ENCODE measurements at regions of chr2 and their contacts with region 1.

Region 1: DNA sequence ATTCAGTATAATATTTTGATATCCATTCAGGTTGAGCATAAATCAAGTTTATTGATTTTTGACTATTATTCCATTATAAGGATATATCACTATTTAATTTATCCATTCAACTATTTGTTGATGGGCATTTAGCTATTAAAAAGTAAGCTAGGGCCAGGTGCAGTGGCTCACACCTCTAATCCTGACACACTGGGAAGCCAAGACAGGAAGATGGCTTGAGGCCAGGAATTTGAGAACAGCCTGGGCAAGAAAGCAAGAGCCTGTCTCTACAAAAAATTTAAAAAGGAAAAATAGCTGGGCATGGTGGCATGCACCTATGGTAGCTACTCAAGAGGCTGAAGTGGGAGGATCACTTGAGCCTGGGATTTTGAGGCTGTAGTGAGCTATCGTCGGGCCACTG is 183.5 kb downstream of the HNMT start:
- DNase-seq: no peak
- ATAC-seq: peak; percentile 35

Region 2: GRCh38 chr2:137992039-137992646 is 155.7 kb before region 1 on chr2:
- intact Hi-C with region 1: no loop called
- DNase-seq: no peak
- ATAC-seq: no peak

Region 3: DNA sequence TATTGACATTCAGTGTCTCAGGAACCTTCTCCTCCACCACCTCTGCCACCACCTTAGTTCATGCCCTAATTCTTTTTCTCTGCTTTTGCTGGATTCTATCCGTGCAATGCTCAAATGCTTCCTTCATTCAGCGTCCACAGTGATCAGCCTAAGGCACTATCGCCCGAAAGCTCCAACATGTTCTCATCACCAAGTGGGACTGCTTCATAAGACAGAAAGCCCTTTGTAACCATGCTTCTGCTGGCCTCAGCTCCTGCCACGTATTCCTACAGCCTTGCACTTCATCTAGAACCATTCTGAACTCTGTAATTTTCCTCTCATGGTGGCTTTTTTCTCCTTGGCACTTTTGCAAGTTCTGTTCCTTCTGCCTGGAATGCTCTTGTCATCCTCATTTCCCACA is 39.4 kb after region 1 on chr2:
- intact Hi-C with region 1: loop called (anchors 1 kb)
- DNase-seq: no peak
- ATAC-seq: no peak

Measured in left ventricle myocardium superior (tissue), 1 donor.